Panc1 (cell line): ENCODE measurements at regions of chr1 and their contacts with region 1.

Region 1: DNA sequence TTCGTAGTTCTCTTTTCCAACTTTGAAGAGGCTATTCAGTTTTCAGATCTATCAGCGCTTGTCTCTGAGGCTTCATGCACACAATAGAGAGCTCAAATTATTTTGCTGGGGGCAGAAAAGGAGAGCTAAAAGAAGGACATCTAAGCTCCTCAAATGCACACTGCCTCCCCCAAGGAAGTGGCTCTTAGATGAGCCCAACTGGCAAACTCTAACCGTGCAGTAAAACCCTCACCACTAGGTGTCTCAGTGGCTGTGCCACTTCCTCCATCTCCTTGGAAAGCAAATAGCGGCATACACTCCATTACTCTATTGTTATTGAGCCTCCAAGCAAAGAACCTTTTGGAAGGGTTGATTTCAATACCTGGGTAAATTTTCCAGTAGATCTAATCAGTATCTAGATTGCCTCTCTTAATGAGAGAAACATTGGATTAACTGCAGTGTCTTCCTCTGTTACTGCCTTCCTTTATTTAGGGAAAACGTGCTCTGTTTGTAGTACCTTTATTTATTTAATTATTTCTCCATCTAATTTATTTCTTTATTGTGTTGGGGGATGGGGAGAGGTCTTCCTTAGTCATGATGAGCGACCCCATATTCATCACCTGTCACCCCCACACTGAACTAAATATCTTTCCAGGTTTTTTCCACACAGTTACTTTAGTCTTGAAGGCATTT is 9.2 kb upstream of the SFPQ start:
- DNase-seq: peak; percentile 78
- ATAC-seq: peak; percentile 100
- H3K4me3 ChIP-seq: no peak overlapping the region
- H3K27ac ChIP-seq: no peak overlapping the region; the same call in 1 of the 2 replicates
- H3K4me1 ChIP-seq: no peaks in the 10 kb centered on the region
- H3K27me3 ChIP-seq: no peaks in the 10 kb centered on the region
- CTCF ChIP-seq: peak; percentile 91

Region 2: GRCh38 chr1:35268282-35269200 is 66.4 kb after region 1 on chr1 and contains the start of gene ZMYM4:
- CTCF ChIA-PET with region 1: no interaction called
- POLR2A ChIA-PET with region 1: interaction called, 4 read pairs
- in situ Hi-C with region 1: no loop called
- intact Hi-C with region 1: loop called (anchors 10 kb)
- DNase-seq: peak; percentile 73
- ATAC-seq: peak; percentile 96
- H3K4me3 ChIP-seq: peak within 1 kb of the TSS; percentile 85 to 93
- H3K27ac ChIP-seq: peak within 1 kb of the TSS; percentile 92
- H3K4me1 ChIP-seq: peaks cover 19% of the 10 kb centered on the region
- H3K27me3 ChIP-seq: no peaks in the 10 kb centered on the region
- CTCF ChIP-seq: no peak
- total RNA-seq, gene ZMYM4: 82.2 TPM

Region 3: GRCh38 chr1:35298464-35298863 is 96.3 kb after region 1 on chr1:
- CTCF ChIA-PET with region 1: no interaction called
- POLR2A ChIA-PET with region 1: no interaction called
- in situ Hi-C with region 1: no loop called
- intact Hi-C with region 1: loop called (anchors 5 kb)
- DNase-seq: peak; percentile 20
- ATAC-seq: peak; percentile 79
- H3K4me3 ChIP-seq: no peak overlapping the region
- H3K27ac ChIP-seq: no peak overlapping the region
- H3K4me1 ChIP-seq: no peaks in the 10 kb centered on the region
- H3K27me3 ChIP-seq: no peaks in the 10 kb centered on the region
- CTCF ChIP-seq: peak; percentile 64

Region 4: GRCh38 chr1:35320937-35321336 is 118.8 kb after region 1 on chr1:
- CTCF ChIA-PET with region 1: no interaction called
- POLR2A ChIA-PET with region 1: interaction called, 15 read pairs
- in situ Hi-C with region 1: no loop called
- intact Hi-C with region 1: no loop called
- DNase-seq: no peak
- ATAC-seq: no peak
- H3K4me3 ChIP-seq: no peak overlapping the region
- H3K27ac ChIP-seq: no peak overlapping the region
- H3K4me1 ChIP-seq: peaks cover 6% of the 10 kb centered on the region; the same call in 1 of the 2 replicates
- H3K27me3 ChIP-seq: no peaks in the 10 kb centered on the region
- CTCF ChIP-seq: no peak